ENCODE measurements at regions of chr6 and their contacts with region 1.

Region 1: DNA sequence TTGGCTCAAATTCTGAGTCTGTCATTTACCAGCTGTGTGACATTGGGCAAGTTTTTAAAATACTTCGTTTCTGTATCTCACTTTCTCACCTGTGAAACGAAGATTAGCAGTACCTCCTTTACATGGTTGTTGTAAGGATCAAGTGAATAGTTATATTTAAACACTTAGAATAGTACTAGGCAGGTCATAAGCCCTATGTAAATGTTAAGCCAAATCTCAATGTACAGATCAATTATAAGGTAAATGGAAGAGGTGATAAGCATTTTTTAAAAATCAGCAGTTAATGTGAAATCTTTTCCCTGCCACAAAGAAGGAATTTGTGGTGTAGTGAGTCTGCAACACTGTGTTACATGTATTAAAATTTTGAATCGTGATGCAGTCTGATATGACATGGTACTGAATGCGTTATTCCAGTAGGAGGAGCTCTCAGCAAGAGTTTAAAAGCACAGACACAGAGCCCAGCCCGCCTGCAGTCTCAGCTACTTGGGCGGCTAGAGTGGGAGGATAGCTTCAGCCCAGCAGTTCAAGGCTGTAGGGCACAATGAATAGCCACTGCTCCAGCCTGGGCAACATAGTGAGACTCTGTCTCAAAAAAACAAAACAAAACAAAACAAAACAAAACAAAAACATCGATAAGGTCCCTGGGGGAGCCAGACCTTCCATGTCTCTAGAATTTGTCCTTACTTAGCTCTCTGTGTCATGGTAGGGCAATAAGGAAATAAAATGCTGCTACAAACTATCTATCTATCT is 46.0 kb downstream of the GTF2H5 start:
- DNase-seq: peak; percentile 70
- H3K4me3 Mint-ChIP-seq: no peak overlapping the region
- H3K27ac Mint-ChIP-seq: no peak overlapping the region
- H3K4me1 Mint-ChIP-seq: peaks cover 19% of the 10 kb centered on the region
- H3K27me3 Mint-ChIP-seq: peaks cover 2% of the 10 kb centered on the region

Region 2: DNA sequence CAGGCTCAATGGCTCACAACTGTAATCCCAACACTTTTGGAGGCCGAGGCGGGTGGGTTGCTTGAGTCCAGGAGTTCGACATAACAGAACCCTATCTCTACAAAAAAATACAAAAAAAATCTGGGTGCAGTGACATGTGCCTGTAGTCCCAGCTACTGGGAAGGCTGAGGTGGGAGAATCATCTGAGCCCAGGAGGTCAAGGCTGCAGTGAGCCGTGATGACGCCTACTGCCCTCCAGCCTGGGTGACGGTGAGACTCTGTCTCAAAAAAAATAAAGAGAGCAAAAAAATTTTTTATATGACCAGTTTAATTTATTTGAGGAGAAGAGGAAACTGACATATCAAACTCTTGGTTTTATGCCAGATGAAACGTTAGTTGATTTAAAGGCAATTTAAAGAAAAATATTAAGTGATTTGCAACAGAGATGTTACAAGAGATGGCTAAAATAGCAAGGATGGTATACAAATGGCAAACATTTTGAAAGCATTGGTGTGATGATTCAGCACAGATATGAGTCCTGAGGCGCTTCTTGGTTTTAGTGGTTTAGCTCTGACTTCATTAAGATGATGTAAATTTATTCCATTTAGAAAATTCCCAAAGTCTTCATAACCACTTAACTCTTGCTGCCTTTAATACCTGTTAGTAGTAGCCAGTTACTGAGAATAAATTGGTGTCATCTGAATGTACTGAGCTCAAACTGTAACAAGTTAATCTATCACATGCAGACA is 28.2 kb before region 1 on chr6:
- CTCF ChIA-PET with region 1: no interaction called
- DNase-seq: no peak
- H3K4me3 Mint-ChIP-seq: no peak overlapping the region
- H3K27ac Mint-ChIP-seq: no peak overlapping the region
- H3K4me1 Mint-ChIP-seq: peaks cover 9% of the 10 kb centered on the region
- H3K27me3 Mint-ChIP-seq: no peaks in the 10 kb centered on the region

Region 3: DNA sequence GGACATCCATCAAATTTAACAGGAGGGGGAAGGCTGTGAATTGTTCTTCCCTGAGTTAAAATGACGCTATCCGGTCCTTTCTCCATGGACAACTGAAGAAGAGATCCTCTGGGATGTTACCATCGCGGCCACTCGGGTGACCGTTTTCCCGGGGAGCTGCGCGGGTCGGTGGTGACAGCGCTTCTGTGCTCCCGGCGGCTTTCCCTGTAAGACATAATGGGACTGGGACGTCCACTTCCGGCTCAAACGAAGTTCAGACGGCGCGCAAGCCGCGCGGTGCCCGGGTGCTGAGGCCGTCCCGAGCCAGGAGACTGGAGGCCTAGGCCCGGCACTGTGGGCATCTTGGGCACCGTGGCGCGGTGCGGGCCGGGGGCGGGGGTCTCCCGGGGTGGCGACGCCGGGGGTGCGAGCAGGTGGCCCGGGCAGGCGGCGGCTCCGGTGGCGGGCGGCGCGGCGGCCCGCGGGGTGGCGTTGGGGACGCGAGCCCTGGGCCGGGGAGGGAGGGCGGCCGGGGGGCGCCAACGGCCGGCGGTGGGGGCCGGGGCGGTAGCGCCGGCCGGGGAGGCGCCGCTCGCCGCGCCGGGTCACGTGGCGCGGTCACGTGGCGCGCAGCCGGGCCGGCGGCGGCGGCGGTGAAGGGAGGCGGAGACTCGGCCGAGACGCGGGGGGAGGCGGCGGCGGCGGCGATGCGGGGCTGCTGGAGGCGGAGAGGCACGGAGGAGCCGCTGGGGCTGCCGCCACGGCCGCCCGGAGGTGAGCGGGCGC is 17.6 kb after region 1 on chr6:
- CTCF ChIA-PET with region 1: interaction called, 10 read pairs
- DNase-seq: peak; percentile 82
- H3K4me3 Mint-ChIP-seq: peak overlapping the region; percentile 90
- H3K27ac Mint-ChIP-seq: peak overlapping the region; percentile 86
- H3K4me1 Mint-ChIP-seq: peaks cover 25% of the 10 kb centered on the region
- H3K27me3 Mint-ChIP-seq: peaks cover 13% of the 10 kb centered on the region

Region 4: DNA sequence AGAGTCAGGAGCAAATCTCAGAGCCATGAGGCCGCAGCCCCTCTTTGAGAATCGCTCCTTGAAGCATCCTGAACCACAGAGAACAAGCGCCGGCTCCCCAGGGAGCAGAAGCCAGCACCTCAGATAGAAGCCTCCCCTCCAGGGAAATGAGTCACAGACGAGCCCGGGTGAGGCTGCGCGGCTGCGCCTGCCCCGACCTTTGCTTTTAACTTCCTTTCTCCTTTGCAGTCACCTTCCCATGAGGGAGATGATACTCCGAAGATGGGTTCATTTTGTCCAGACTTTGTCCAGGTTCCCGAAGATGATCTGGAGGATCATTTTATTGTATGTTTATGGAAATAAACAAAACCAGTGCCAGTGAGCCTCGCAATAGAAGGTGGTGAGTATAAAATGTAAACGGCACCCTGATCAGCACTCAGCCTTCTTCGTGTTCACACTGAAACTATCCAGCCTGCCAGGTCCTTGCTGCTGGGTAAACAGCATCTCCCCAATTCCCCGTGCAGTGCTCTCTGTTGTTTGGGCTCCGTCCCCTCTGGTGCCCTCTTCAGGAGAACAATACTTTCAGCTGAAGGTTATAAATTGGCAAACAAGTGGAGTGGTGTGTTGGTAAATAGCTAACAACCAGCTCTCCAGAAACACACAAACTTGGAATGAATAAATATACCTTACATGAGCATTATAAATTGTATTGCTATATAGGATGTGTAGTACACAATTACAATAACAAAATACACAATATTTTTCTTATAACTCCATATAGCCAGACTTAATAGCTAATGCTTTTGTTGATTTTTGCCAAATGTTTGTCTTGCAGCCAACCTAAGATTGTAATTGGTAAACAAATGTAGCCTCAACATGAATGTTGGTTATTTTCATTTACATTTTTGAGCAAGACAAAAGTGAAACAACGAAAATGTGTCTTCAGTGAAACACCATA is 304.4 kb after region 1 on chr6:
- CTCF ChIA-PET with region 1: interaction called, 20 read pairs
- DNase-seq: peak; percentile 82
- H3K4me3 Mint-ChIP-seq: peak overlapping the region; percentile 77
- H3K27ac Mint-ChIP-seq: peak overlapping the region; percentile 80
- H3K4me1 Mint-ChIP-seq: peaks cover 53% of the 10 kb centered on the region
- H3K27me3 Mint-ChIP-seq: peaks cover 66% of the 10 kb centered on the region

Region 5: GRCh38 chr6:158605266-158605878 is 391.3 kb after region 1 on chr6:
- CTCF ChIA-PET with region 1: interaction called, 29 read pairs
- DNase-seq: peak; percentile 71
- H3K4me3 Mint-ChIP-seq: no peak overlapping the region
- H3K27ac Mint-ChIP-seq: no peak overlapping the region
- H3K4me1 Mint-ChIP-seq: peaks cover 4% of the 10 kb centered on the region
- H3K27me3 Mint-ChIP-seq: no peaks in the 10 kb centered on the region

Measured in activated naive CD4-positive, alpha-beta T cell treated with anti-CD3 and anti-CD28 coated beads, Interleukin-2, amount 10 ng/mL, durations not matched to agents 7 days and 5 days (primary cell).